ENCODE measurements at regions of chr6 and their contacts with region 1.

Region 1: DNA sequence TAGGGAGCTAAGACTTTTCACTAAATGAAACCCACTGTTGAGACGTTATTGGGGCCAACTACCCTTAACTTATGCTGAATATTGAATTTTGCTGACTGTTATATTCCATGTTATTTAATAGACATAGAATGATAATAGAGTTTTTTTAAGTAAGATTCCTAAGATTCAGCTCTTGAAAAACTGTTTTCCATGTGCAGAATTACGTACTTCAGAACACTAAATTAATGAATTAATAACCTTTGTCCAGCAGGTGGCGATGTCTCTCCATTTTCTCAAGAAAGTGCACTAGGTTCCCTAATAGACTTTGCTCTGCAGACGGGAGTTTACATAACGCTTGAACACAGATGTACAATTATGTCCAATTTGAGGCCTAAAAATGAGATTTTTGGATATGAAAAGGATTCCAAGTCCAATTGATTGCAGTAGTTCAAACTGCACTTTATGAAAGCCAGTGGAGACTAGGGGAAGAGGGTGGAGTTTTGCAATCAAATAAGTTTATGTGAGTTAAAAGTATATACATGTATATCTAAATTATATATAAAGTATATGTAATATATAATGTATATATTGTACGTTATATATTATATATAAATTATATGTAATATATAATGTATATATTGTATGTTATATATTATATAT is 282.1 kb downstream of the UST start:
- DNase-seq: peak; percentile 67
- H3K4me3 Mint-ChIP-seq: peak overlapping the region; percentile 77
- H3K27ac Mint-ChIP-seq: peak overlapping the region; percentile 87
- H3K4me1 Mint-ChIP-seq: peaks cover 57% of the 10 kb centered on the region
- H3K27me3 Mint-ChIP-seq: no peaks in the 10 kb centered on the region

Region 2: DNA sequence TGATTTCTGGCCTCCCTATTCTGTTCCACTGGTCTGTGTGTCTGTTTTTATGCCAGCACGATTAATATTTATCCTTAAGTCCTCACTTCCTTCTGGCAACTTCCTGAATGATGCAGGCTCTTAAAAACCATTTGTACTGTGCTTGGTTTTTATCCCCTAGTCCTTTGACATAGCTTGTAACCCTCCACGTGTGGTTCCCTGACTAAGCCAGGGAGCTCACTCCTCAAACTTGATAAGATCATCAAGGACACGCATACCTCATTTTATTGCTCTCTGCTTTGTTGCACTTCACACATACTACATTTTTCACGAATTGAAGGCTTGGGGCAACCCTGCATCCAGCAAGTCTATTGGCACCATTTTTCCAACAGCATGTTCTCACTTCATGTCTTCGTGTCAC is 448.4 kb before region 1 on chr6:
- intact Hi-C with region 1: no loop called
- DNase-seq: no peak
- H3K4me3 Mint-ChIP-seq: no peak overlapping the region
- H3K27ac Mint-ChIP-seq: no peak overlapping the region
- H3K4me1 Mint-ChIP-seq: no peaks in the 10 kb centered on the region
- H3K27me3 Mint-ChIP-seq: peaks cover 22% of the 10 kb centered on the region

Region 3: DNA sequence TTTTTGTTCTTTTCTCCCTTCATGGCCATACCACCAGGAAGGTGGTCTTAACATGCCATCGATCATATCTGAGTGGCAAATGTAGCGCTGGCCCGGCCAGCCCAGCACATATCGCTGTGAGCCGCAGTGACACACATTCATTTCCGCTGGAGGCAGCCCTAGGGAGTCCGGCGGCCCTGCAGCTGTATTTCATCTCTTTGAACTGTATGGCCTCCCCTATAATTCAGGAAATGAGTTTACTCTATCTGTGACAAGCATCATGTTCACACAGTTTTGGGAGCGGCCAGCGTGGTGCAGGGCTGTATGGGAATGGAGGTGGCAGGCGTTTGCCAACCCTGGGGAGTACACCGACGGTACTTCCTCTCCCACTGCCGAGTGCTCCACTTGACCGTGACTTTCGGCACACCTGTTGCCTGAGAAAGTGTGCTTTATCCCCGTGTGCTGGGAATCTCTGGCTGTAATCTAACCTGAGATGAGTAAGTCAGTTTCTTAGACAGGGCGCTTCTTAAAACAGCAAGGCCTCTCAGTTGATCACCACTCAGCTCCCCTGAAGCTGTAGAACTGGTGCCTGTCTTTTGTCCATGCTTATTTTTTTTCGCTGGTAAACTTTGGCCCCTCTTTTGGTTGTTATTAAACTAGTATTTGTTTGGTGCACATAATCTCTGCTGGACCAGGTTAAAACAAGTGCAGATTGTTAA is 31.6 kb after region 1 on chr6:
- intact Hi-C with region 1: loop called (anchors 1 kb)
- DNase-seq: peak; percentile 48
- H3K4me3 Mint-ChIP-seq: peak overlapping the region; percentile 76
- H3K27ac Mint-ChIP-seq: peak overlapping the region; percentile 89
- H3K4me1 Mint-ChIP-seq: peaks cover 64% of the 10 kb centered on the region
- H3K27me3 Mint-ChIP-seq: no peaks in the 10 kb centered on the region

Region 4: GRCh38 chr6:149094156-149094555 is 65.3 kb after region 1 on chr6:
- intact Hi-C with region 1: no loop called
- DNase-seq: no peak
- H3K4me3 Mint-ChIP-seq: peak overlapping the region; percentile 64
- H3K27ac Mint-ChIP-seq: peak overlapping the region; percentile 88
- H3K4me1 Mint-ChIP-seq: peaks cover 78% of the 10 kb centered on the region
- H3K27me3 Mint-ChIP-seq: no peaks in the 10 kb centered on the region

Region 5: DNA sequence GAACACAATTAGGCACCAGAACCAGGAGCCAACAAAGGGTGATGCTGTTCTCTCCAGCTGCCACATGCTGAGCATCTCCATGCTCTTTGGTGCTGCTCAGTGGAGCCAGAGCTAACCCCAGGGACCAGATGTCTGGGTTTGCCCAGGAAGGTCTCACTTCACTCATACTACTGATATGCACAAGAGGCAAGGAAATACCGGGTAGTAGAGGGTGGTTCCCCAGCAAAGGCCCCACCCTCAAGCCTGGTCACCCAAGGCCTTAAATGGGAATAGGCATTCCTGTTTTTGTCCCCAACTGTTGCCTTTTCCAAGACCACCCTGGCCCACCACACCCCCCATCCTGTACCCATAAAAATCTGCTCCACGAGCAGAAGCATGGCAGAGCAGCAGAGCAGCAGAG is 84.1 kb after region 1 on chr6:
- intact Hi-C with region 1: loop called (anchors 2 kb)
- DNase-seq: no peak
- H3K4me3 Mint-ChIP-seq: peak overlapping the region; percentile 46
- H3K27ac Mint-ChIP-seq: peak overlapping the region; percentile 89
- H3K4me1 Mint-ChIP-seq: peaks cover 92% of the 10 kb centered on the region
- H3K27me3 Mint-ChIP-seq: no peaks in the 10 kb centered on the region

Region 6: GRCh38 chr6:149235130-149235561 is 206.3 kb after region 1 on chr6:
- intact Hi-C with region 1: loop called (anchors 1 kb)
- DNase-seq: no peak
- H3K4me3 Mint-ChIP-seq: peak overlapping the region; percentile 75
- H3K27ac Mint-ChIP-seq: peak overlapping the region; percentile 97
- H3K4me1 Mint-ChIP-seq: peaks cover 71% of the 10 kb centered on the region
- H3K27me3 Mint-ChIP-seq: no peaks in the 10 kb centered on the region

Region 7: DNA sequence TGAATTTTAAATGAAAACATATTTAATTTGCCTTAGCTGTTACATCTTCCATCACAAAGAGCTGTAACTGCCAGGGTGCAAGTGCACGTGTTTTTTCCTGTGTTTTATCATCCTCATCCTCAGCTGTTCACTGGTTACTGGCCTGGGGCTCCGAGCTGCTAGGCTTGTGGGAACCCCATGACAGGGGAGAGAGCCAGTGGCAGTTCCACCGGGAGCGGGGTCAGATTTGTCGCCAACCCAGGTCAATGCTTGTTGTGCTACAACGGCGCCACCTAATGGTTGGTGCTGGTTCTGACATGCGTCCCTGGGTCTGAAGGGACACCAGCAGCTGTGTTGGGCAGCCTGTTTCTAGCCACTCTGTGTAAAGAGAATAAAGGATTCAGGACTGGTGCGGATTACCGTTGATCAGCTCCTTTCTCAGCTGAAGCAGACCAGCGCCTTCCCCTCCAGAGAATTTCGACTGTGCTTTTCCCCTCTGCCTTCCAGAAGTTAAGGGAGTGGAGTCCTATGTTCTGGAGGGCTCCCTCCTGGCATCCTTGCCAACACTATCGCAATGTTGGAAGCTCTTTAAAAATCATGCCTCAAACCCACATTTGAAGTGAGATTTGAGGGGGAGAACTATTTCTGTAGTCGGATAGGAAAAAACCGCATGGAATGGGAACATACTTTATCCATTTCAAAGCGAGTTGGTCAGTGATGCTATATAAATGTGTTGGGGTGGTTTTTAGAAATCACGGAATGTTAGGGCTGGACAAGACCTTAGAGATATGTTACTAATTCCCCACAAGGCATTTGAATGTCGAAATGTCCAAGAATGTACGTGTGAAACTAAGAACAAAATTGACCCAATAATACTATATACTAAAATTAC is 403.3 kb after region 1 on chr6:
- intact Hi-C with region 1: loop called (anchors 1 kb)
- DNase-seq: peak; percentile 79
- H3K4me3 Mint-ChIP-seq: peak overlapping the region; percentile 48
- H3K27ac Mint-ChIP-seq: peak overlapping the region; percentile 79
- H3K4me1 Mint-ChIP-seq: peaks cover 23% of the 10 kb centered on the region
- H3K27me3 Mint-ChIP-seq: no peaks in the 10 kb centered on the region

Region 8: GRCh38 chr6:149513915-149514314 is 485.0 kb after region 1 on chr6:
- intact Hi-C with region 1: loop called (anchors 1 kb)
- DNase-seq: no peak
- H3K4me3 Mint-ChIP-seq: no peak overlapping the region
- H3K27ac Mint-ChIP-seq: no peak overlapping the region
- H3K4me1 Mint-ChIP-seq: peaks cover 47% of the 10 kb centered on the region
- H3K27me3 Mint-ChIP-seq: no peaks in the 10 kb centered on the region

Measured in activated T-helper 1 cell treated with anti-CD3 and anti-CD28 coated beads, Interleukin-12 subunit alpha, Interleukin-12 subunit beta, Interleukin-2, Interleukin-4 antibody, amounts not matched to agents 30 ng/mL and 10 ng/mL and 1 ng/mL, durations not matched to agents 14 hours and 24 hours and 36 hours (primary cell).